ENCODE measurements at regions of chr10 and their contacts with region 1.

Region 1: DNA sequence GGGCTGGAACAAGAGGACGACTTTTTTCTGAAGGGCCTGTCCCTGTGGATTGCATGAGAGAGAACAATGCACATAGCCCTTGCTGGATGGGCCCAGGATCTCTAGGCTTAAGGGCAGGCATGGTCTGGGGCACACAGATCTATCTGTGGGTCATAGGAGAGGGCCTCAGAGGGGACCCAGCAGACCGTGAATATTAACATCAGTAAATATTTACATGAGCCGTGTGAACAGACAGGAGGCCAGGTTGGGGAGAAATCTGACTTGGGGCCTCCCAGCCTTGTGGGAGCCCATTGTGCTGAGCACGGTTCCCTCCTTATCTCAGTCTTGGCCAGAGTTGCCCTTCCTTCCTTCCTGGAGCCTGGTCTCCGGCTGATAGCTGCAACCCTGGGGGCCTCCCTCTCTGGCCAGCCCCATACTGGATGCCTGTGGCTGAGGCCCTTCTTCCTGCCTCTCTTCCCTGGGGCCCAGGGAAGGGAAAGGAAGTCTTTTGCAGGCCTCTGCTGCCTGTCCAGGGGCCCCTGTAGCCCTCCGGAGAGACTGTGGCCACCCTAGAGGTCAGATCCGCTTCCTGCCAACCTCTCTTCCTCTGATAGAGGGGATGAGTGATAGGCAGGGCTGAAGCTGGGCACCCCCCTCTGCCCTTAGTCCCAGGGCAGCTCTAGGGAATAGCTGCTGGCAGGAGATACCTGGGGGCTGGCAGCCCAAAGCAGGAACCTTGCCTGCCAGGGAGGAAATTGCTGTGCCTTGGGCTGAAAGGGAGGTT is 44.5 kb upstream of the TRIM8 start:
- DNase-seq: no peak
- H3K4me3 Mint-ChIP-seq: no peak overlapping the region
- H3K27ac Mint-ChIP-seq: no peak overlapping the region
- H3K4me1 Mint-ChIP-seq: peaks cover 7% of the 10 kb centered on the region
- H3K27me3 Mint-ChIP-seq: no peaks in the 10 kb centered on the region

Region 2: DNA sequence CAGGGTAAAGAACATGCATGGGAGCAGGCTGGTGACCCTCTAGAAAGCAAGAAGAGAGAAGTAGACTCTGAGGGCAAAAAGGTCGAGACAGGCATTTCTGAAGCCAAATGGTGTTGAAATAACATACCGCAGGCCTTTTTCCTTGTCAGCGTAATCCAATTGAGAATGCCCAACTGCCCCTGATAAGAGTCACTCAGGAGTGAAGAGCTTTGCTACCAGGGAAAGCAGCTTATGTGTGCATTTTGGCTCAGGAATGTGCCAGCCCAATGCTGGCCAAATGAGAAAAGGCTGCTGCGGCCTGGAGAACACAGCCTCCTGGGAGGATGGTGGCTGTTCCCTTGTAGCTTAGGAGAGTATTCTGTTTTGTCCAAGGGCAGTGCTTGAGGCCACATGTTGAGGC is 265.6 kb before region 1 on chr10:
- CTCF ChIA-PET with region 1: no interaction called
- POLR2A ChIA-PET with region 1: no interaction called
- intact Hi-C with region 1: no loop called
- DNase-seq: no peak
- H3K4me3 Mint-ChIP-seq: no peak overlapping the region
- H3K27ac Mint-ChIP-seq: no peak overlapping the region
- H3K4me1 Mint-ChIP-seq: peaks cover 24% of the 10 kb centered on the region
- H3K27me3 Mint-ChIP-seq: no peaks in the 10 kb centered on the region

Region 3: GRCh38 chr10:102509387-102509786 is 90.4 kb before region 1 on chr10:
- CTCF ChIA-PET with region 1: no interaction called
- POLR2A ChIA-PET with region 1: no interaction called
- intact Hi-C with region 1: loop called (anchors 1 kb)
- DNase-seq: no peak
- H3K4me3 Mint-ChIP-seq: no peak overlapping the region
- H3K27ac Mint-ChIP-seq: no peak overlapping the region
- H3K4me1 Mint-ChIP-seq: peaks cover 27% of the 10 kb centered on the region
- H3K27me3 Mint-ChIP-seq: no peaks in the 10 kb centered on the region